ENCODE measurements at regions of chr19 and their contacts with region 1.

Region 1: GRCh38 chr19:1131738-1132551 is 28.2 kb downstream of the GPX4 start:
- DNase-seq: peak; percentile 62 to 94 (median 88)
- ATAC-seq: peak; percentile 69
- H3K4me3 ChIP-seq: peak overlapping the region; percentile 95
- H3K4me3 Mint-ChIP-seq: peak overlapping the region; percentile 90
- H3K27ac ChIP-seq: peak overlapping the region; percentile 87 to 92
- H3K27ac Mint-ChIP-seq: peak overlapping the region; percentile 96
- H3K4me1 ChIP-seq: peaks cover 90% of the 10 kb centered on the region
- H3K4me1 Mint-ChIP-seq: peaks cover 36% of the 10 kb centered on the region
- H3K27me3 ChIP-seq: no peaks in the 10 kb centered on the region
- H3K27me3 Mint-ChIP-seq: no peaks in the 10 kb centered on the region
- CTCF ChIP-seq: no peak

Region 2: GRCh38 chr19:1113033-1113985 is 18.6 kb before region 1 on chr19:
- CTCF ChIA-PET with region 1: interaction called, 18 read pairs
- POLR2A ChIA-PET with region 1: interaction called, 14 read pairs
- intact Hi-C with region 1: no loop called
- DNase-seq: peak; percentile 73 to 94 (median 80)
- ATAC-seq: peak; percentile 87
- H3K4me3 ChIP-seq: no peak overlapping the region
- H3K4me3 Mint-ChIP-seq: no peak overlapping the region
- H3K27ac ChIP-seq: peak overlapping the region; percentile 21 to 22
- H3K27ac Mint-ChIP-seq: peak overlapping the region; percentile 30
- H3K4me1 ChIP-seq: peaks cover 16% of the 10 kb centered on the region
- H3K4me1 Mint-ChIP-seq: no peaks in the 10 kb centered on the region
- H3K27me3 ChIP-seq: no peaks in the 10 kb centered on the region
- H3K27me3 Mint-ChIP-seq: no peaks in the 10 kb centered on the region
- CTCF ChIP-seq: peak; percentile 85

Region 3: DNA sequence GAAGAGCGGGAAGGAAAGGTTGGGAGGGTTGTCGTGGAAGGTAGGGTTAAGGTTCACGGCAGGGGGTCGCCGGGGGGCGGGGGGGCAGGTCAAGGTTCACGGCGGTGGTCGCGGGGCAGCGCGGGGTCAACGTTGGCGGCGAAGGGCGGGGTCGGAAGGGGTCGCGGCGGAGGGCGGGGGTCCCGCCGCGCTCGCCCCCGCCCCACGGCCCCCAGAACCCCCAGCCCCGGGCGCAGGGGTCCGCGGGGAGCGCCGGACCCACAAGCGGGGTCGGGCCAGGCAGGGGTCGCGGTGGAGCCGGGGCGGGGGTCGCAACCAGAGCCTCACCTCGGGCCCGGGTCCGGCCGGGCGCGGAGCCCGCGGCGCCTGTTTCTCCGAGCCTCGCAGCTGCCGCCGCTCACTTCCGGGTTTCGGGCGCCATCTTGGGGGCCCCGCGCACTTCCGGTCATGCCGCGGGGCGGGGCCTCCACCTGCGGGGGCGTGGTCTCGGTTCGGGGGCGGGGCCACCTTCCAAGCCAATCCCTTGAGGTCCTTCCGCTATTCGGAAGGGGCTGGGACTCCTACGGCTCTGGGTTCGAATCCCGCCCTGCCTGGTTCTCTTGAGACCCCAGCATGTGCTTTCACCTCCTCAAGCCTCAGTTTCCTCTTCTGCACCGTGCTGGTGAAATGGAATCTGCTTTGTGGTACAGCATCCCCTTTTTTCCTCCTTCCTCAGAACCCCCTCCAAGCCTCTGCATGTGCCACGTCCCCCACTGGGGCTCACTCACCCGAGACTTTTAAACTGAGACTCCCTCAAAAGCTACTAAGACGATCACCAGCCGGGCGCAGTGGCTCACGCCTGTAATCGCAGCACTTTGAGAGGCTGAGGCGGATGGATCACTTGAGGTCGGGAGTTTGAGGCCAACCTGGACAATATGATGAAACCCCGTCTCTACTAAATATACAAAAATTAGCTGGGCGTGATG is 42.2 kb after region 1 on chr19 and contains the start of gene SBNO2:
- CTCF ChIA-PET with region 1: no interaction called
- POLR2A ChIA-PET with region 1: interaction called, 8 read pairs
- intact Hi-C with region 1: loop called (anchors 2 to 5 kb)
- DNase-seq: peak; percentile 77 to 96 (median 90)
- ATAC-seq: peak; percentile 90
- H3K4me3 ChIP-seq: peak within 1 kb of the TSS; percentile 83
- H3K4me3 Mint-ChIP-seq: peak within 1 kb of the TSS; percentile 92
- H3K27ac ChIP-seq: peak within 1 kb of the TSS; percentile 62 to 68
- H3K27ac Mint-ChIP-seq: peak within 1 kb of the TSS; percentile 91
- H3K4me1 ChIP-seq: peaks cover 53% of the 10 kb centered on the region
- H3K4me1 Mint-ChIP-seq: peaks cover 24% of the 10 kb centered on the region
- H3K27me3 ChIP-seq: no peaks in the 10 kb centered on the region
- H3K27me3 Mint-ChIP-seq: no peaks in the 10 kb centered on the region
- CTCF ChIP-seq: no peak
- total RNA-seq, gene SBNO2: 126 to 137 TPM

Region 4: GRCh38 chr19:1406774-1407499 is 275.0 kb after region 1 on chr19:
- CTCF ChIA-PET with region 1: no interaction called
- POLR2A ChIA-PET with region 1: no interaction called
- intact Hi-C with region 1: no loop called
- DNase-seq: peak; percentile 98 to 100 (median 99)
- ATAC-seq: peak; percentile 79
- H3K4me3 ChIP-seq: peak overlapping the region; percentile 51
- H3K4me3 Mint-ChIP-seq: peak overlapping the region; percentile 92
- H3K27ac ChIP-seq: peak overlapping the region; percentile 52 to 73
- H3K27ac Mint-ChIP-seq: peak overlapping the region; percentile 78
- H3K4me1 ChIP-seq: peaks cover 56% of the 10 kb centered on the region
- H3K4me1 Mint-ChIP-seq: peaks cover 46% of the 10 kb centered on the region
- H3K27me3 ChIP-seq: peaks cover 0 to 11% of the 10 kb centered on the region in 2 experiments
- H3K27me3 Mint-ChIP-seq: no peaks in the 10 kb centered on the region
- CTCF ChIP-seq: peak; percentile 62

Measured in CD4-positive, alpha-beta T cell (primary cell).